Heart left ventricle (tissue), 16 donors: ENCODE measurements at regions of chr6 and their contacts with region 1.

Region 1: GRCh38 chr6:32868257-32868788 is 14.3 kb downstream of the PSMB9 start:
- DNase-seq: peak; percentile 64 to 85 (median 78)
- ATAC-seq: peak in 3 of 4 donors; percentile 56 to 73 (median 69)
- H3K4me3 ChIP-seq: no peak overlapping the region
- H3K27ac ChIP-seq: no peak overlapping the region
- H3K4me1 ChIP-seq: peaks cover 0 to 13% (median 0%) of the 10 kb centered on the region in 12 donors
- H3K27me3 ChIP-seq: peaks cover 0 to 6% (median 0%) of the 10 kb centered on the region in 9 donors
- CTCF ChIP-seq: peak; percentile 90 to 99 (median 96)
- POLR2A ChIP-seq: no peak

Region 2: DNA sequence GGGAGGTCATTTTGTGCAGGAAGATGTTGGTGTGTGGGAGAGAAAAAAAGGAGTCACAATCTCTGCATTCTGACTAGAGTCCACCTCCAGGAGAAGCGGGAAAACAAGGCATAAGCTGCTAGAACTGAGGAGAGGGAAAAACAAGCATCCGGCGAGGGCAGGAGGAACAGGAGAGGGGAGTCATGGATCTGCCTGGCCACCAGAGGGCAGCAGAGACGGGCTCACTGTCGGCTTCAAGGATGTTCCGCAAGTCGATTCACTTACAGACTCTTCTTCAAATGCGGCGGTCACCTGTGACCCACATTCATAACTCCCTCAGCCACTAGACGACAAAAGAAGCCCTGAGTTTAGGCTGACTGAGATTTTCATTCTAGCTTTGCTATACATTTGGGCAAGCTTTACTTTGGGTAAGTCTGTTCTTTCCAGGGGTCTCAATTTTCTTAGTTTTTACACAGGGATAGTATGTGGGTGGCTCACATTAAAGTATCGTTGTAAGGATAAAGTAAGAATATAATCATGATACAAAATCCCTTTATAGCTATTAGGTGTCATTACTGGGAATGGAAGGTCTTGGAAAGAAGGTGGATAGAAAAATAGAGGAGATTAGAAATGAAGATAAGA is 454.8 kb before region 1 on chr6:
- intact Hi-C with region 1: loop called in 7 of 10 experiments (anchors 2 to 10 kb)
- DNase-seq: peak; percentile 77 to 91 (median 78)
- ATAC-seq: peak in 3 of 4 donors; percentile 69 to 89 (median 85)
- H3K4me3 ChIP-seq: no peak overlapping the region
- H3K27ac ChIP-seq: no peak overlapping the region
- H3K4me1 ChIP-seq: peaks cover 0 to 17% (median 0%) of the 10 kb centered on the region in 12 donors
- H3K27me3 ChIP-seq: peaks cover 0 to 65% (median 11%) of the 10 kb centered on the region in 9 donors
- CTCF ChIP-seq: peak; percentile 88 to 97 (median 94)
- POLR2A ChIP-seq: no peak

Region 3: GRCh38 chr6:32825966-32826365 is 42.4 kb before region 1 on chr6:
- intact Hi-C with region 1: loop called in 8 of 10 experiments (anchors 2 to 5 kb)
- DNase-seq: no peak
- ATAC-seq: peak; percentile 51 to 87 (median 82)
- H3K4me3 ChIP-seq: no peak overlapping the region
- H3K27ac ChIP-seq: peak overlapping the region in 7 of 12 donors; percentile 16 to 60 (median 50)
- H3K4me1 ChIP-seq: peaks cover 0 to 31% (median 0%) of the 10 kb centered on the region in 12 donors
- H3K27me3 ChIP-seq: no peaks in the 10 kb centered on the region
- CTCF ChIP-seq: peak; percentile 19 to 57 (median 49)
- POLR2A ChIP-seq: no peak

Region 4: GRCh38 chr6:32838114-32838958 is 30.0 kb before region 1 on chr6 and contains the start of gene TAP2:
- intact Hi-C with region 1: loop called in 7 of 10 experiments (anchors 1 to 5 kb)
- DNase-seq: peak; percentile 95 to 98 (median 96)
- ATAC-seq: peak; percentile 95 to 97 (median 96)
- H3K4me3 ChIP-seq: peak within 1 kb of the TSS; percentile 60 to 96 (median 78)
- H3K27ac ChIP-seq: peak within 1 kb of the TSS; percentile 69 to 100 (median 96)
- H3K4me1 ChIP-seq: peaks cover 0 to 60% (median 19%) of the 10 kb centered on the region in 12 donors
- H3K27me3 ChIP-seq: no peaks in the 10 kb centered on the region
- CTCF ChIP-seq: peak; percentile 92 to 99 (median 97)
- POLR2A ChIP-seq: peak in 1 of 2 donors; percentile 35
- total RNA-seq, gene TAP2: 5.4 to 107 (median 14.9) TPM

Region 5: DNA sequence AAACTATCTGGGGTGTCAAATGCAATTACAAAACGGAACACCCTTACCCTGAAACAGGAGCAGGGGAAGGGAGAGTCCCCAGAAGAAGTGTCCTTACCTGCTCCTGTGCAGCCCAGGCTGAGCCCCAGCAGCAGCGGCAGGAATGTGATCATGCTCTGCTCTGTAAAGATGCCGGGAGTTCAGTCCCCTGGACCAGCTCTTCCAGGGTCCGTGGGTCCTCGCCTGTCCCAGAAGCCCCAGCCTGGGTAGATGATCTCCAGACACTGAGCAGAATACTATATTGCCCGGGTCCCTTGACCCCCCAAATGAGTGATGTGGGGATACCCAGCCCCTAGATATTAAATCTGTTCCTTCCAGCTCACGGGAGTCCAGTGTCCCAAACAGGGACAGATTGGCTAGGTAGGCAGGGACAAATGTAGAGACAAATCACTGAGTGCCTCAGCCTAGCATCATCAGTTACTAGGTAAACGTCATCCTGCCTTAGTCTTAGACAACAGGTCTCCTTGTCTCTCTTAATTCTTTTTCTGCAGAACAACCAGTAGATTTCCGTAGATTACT is 72.4 kb after region 1 on chr6 and contains the start of gene HLA-DMB:
- intact Hi-C with region 1: no loop called
- DNase-seq: peak in 3 of 5 donors; percentile 37 to 80 (median 67)
- ATAC-seq: peak; percentile 92 to 97 (median 96)
- H3K4me3 ChIP-seq: peak within 1 kb of the TSS; percentile 22 to 75 (median 56)
- H3K27ac ChIP-seq: peak within 1 kb of the TSS; percentile 52 to 97 (median 86)
- H3K4me1 ChIP-seq: peaks cover 0 to 94% (median 11%) of the 10 kb centered on the region in 12 donors
- H3K27me3 ChIP-seq: no peaks in the 10 kb centered on the region
- CTCF ChIP-seq: no peak
- POLR2A ChIP-seq: peak in 1 of 2 donors; percentile 22
- total RNA-seq, gene HLA-DMB: 2.7 to 127 (median 9.3) TPM